ENCODE measurements at regions of chr18 and their contacts with region 1.

Region 1: GRCh38 chr18:50819728-50820378 is at the start of gene MRO:
- DNase-seq: peak; percentile 75
- H3K4me3 ChIP-seq: peak within 1 kb of the TSS; percentile 7 to 23
- H3K27ac ChIP-seq: no peak within 1 kb of the TSS
- H3K4me1 ChIP-seq: no peaks in the 10 kb centered on the region
- H3K27me3 ChIP-seq: no peaks in the 10 kb centered on the region
- CTCF ChIP-seq: peak; percentile 77 to 91 (median 86)
- POLR2A ChIP-seq: no peak
- total RNA-seq, gene MRO: 0.23 to 64.8 TPM

Region 2: DNA sequence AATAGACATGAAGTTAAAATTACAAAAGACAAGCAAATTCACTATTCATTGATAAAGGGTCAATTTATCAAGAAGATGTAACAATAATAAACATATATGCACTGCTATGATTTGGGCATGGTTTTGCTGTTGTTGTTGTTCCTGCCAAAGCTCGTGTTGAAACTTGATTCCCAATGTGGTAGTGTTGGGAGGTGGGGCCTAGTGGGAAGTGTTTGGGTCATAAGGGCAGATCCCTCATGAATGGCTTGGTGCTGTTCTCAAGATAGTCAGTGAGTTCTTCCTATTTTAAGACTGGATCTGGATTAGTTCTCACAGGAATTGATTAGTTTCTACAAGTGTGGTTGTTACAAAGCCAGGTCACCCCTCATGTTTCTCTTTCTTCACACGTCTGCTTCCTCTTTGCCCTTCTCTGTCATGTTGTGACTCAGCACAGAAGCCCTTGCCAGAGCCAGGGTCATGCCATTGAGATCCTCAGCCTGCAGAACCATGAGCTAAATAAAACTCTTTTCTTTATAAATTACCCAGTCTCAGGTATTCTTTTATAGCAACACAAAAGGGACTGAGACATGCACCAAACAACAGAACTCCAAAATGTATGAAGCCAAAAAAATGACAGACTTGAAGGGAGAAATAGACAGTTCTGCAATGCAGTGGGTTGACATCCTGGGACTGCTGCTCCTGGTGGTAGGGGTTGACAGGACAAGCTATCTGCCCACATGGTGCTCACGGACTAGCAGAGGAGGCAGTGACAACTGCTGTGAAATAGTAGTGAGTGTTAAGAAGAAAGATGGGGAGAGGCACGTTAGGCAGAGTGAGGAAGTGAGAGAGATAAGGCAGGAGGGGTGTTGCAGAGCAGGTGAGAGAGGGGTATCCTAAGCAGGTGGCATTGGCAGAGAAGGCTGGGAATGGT is 463.6 kb before region 1 on chr18:
- intact Hi-C with region 1: no loop called
- DNase-seq: no peak
- H3K4me3 ChIP-seq: no peak overlapping the region
- H3K27ac ChIP-seq: no peak overlapping the region
- H3K4me1 ChIP-seq: no peaks in the 10 kb centered on the region
- H3K27me3 ChIP-seq: no peaks in the 10 kb centered on the region
- CTCF ChIP-seq: no peak
- POLR2A ChIP-seq: no peak

Region 3: DNA sequence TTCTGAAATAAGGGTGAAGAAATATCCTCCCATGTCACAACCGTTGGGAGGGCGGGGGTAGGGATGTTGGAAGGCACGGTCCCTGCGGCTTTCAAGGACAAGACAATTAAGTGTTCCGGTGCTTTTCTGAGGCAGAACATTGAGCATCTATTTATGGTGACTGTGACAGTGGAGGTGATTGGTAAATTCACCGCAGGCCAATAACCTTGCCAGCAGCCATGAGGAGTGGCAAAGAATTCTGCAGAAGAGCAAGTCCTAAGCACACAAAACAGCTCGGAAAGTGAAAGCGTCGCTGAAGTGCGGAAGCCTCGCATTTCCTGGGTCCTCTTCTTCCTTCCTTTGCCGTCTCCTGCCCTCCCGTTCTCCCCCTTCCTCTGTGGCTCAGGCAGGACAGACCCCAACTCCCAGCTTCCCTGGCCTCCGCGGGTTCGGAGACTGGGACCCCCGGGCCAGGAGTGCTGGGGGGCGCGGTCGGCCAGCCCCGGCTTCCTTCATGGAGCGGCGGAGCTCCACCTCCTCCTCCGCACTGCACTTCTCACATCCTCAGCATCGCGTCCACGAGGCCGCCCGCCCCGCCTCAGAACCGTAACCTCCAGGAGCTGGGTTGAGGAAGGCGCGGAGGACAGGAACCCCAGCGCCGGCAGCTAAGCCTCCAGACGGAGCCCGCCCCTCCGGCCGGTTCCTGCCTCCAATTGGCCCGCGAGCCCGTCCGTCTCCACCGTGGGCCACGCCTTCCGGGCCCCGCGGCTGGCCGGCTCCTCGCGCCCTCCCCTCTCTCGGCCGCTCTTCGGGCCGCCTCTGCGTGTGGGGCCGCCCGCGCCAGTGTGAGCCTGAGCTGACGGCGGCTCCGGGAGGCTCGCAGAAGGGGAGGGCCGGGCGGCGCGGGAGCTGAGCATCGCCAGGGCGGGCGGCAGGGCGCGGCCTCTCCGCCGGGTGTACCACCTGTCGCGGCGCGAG is 58.8 kb after region 1 on chr18 and contains the start of gene ME2:
- intact Hi-C with region 1: loop called (anchors 5 kb)
- DNase-seq: peak; percentile 91
- H3K4me3 ChIP-seq: peak within 1 kb of the TSS; percentile 78 to 89
- H3K27ac ChIP-seq: peak within 1 kb of the TSS; percentile 91 to 92
- H3K4me1 ChIP-seq: no peaks in the 10 kb centered on the region
- H3K27me3 ChIP-seq: no peaks in the 10 kb centered on the region
- CTCF ChIP-seq: no peak
- POLR2A ChIP-seq: peak; percentile 94
- total RNA-seq, gene ME2: 38.3 to 59.4 TPM

Region 4: GRCh38 chr18:50967714-50968661 is 148.1 kb after region 1 on chr18 and contains the start of gene ELAC1:
- intact Hi-C with region 1: loop called (anchors 10 kb)
- DNase-seq: peak; percentile 62
- H3K4me3 ChIP-seq: peak within 1 kb of the TSS; percentile 91 to 93
- H3K27ac ChIP-seq: peak within 1 kb of the TSS; percentile 96 to 98
- H3K4me1 ChIP-seq: peaks cover 5% of the 10 kb centered on the region
- H3K27me3 ChIP-seq: no peaks in the 10 kb centered on the region
- CTCF ChIP-seq: peak in 2 of 4 experiments; percentile 4 to 17
- POLR2A ChIP-seq: peak; percentile 71
- total RNA-seq, gene ELAC1: 7.1 to 16.0 TPM

Region 5: DNA sequence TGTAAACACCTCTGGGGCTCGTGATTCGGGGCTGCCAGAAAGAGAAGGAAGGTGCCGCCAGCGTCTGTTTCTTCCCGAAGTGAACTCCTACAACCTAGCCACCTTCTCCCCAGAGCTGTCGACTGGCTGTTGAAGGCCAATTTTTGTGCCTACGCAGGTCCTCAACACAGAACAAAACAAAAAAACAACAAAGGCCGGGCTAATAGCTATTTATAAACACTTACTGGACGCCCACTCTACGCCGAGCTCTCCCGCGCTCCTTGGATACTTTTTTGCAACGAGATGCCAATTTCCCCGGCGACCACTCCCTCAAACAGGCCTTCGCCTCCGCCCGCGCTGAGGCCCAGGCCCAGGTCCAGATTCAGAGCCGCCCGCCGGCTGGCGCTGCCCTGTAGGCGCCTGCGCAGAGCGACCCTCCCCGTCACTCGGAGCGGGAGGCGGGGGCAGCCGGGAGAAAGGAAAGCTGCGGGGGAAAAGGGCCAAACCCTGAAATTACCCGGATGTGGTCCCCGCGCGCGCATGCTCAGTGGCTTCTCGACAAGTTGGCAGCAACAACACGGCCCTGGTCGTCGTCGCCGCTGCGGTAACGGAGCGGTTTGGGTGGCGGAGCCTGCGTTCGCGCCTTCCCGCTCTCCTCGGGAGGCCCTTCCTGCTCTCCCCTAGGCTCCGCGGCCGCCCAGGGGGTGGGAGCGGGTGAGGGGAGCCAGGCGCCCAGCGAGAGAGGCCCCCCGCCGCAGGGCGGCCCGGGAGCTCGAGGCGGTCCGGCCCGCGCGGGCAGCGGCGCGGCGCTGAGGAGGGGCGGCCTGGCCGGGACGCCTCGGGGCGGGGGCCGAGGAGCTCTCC is 210.1 kb after region 1 on chr18 and contains the start of gene SMAD4:
- intact Hi-C with region 1: loop called (anchors 10 kb)
- DNase-seq: peak; percentile 94
- H3K4me3 ChIP-seq: peak within 1 kb of the TSS; percentile 61 to 91
- H3K27ac ChIP-seq: peak within 1 kb of the TSS; percentile 99 to 100
- H3K4me1 ChIP-seq: peaks cover 9% of the 10 kb centered on the region
- H3K27me3 ChIP-seq: no peaks in the 10 kb centered on the region
- CTCF ChIP-seq: peak in 2 of 4 experiments; percentile 14 to 18
- POLR2A ChIP-seq: peak; percentile 90
- total RNA-seq, gene SMAD4: 214 to 225 TPM

Region 6: GRCh38 chr18:51051105-51051712 is 231.4 kb after region 1 on chr18:
- intact Hi-C with region 1: loop called (anchors 5 kb)
- DNase-seq: peak; percentile 26
- H3K4me3 ChIP-seq: no peak overlapping the region
- H3K27ac ChIP-seq: no peak overlapping the region
- H3K4me1 ChIP-seq: peaks cover 9% of the 10 kb centered on the region
- H3K27me3 ChIP-seq: no peaks in the 10 kb centered on the region
- CTCF ChIP-seq: peak; percentile 61 to 75 (median 72)
- POLR2A ChIP-seq: no peak

Region 7: DNA sequence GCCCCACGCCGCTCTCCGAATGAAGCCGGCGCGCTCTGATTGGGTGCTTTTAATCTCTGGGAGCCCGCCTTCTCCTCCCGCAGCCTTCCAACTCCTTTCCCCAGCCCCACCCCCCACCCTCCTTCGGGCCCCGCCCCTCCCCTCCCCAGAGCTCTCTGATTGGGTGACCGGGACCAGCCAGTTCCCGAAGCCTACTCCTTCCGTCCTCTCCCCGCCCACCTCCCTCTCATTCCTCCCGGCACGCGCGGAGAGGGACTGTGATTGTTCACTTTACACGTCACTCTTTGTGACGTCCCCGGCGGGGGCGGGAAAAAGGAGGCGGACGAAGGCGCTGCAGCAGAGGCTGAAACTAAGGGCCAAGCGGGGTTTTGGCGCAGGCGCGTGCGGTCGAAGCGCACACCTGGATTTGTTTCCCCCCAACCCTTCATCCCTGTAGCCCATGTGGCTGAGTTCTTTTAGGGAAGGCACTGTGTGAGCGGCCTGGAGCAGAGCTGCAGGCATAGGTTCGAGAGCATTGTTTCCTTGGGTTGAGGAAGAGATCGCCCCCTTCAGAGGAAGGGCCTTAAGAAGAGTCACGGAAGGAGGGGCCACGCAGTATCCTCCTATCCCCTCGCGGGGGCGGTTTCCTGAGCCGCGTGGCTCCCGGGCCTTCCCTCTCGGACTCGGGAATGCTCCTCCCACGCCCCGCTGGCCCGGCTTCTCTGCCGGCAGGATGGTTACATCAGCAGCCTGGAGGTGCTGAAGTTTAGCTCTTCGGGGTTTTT is 378.0 kb after region 1 on chr18 and contains the start of gene MEX3C:
- intact Hi-C with region 1: loop called (anchors 10 kb)
- DNase-seq: peak; percentile 99
- H3K4me3 ChIP-seq: peak within 1 kb of the TSS; percentile 81
- H3K27ac ChIP-seq: peak within 1 kb of the TSS; percentile 94 to 97
- H3K4me1 ChIP-seq: peaks cover 8% of the 10 kb centered on the region
- H3K27me3 ChIP-seq: no peaks in the 10 kb centered on the region
- CTCF ChIP-seq: peak in 2 of 4 experiments; percentile 49 to 50
- POLR2A ChIP-seq: peak; percentile 84
- total RNA-seq, gene MEX3C: 29.2 to 54.0 TPM